IMR-90 (cell line): ENCODE measurements at regions of chr7 and their contacts with region 1.

Region 1: GRCh38 chr7:17646253-17646956 is 293.9 kb downstream of the SNX13 start:
- DNase-seq: peak; percentile 66
- ATAC-seq: peak; percentile 79
- H3K4me3 ChIP-seq: no peak overlapping the region
- H3K27ac ChIP-seq: no peak overlapping the region
- H3K4me1 ChIP-seq: peaks cover 8% of the 10 kb centered on the region
- H3K27me3 ChIP-seq: no peaks in the 10 kb centered on the region
- CTCF ChIP-seq: peak; percentile 71
- POLR2A ChIP-seq: no peak
- RAD21 ChIP-seq: peak; percentile 78

Region 2: GRCh38 chr7:16926283-16926682 is 720.1 kb before region 1 on chr7:
- CTCF ChIA-PET with region 1: interaction called, 3 read pairs
- POLR2A ChIA-PET with region 1: no interaction called
- dilution Hi-C with region 1: no loop called
- in situ Hi-C with region 1: no loop called
- intact Hi-C with region 1: loop called (anchors 1 kb)
- DNase-seq: peak; percentile 54
- ATAC-seq: peak; percentile 95
- H3K4me3 ChIP-seq: no peak overlapping the region
- H3K27ac ChIP-seq: no peak overlapping the region
- H3K4me1 ChIP-seq: peaks cover 3% of the 10 kb centered on the region
- H3K27me3 ChIP-seq: no peaks in the 10 kb centered on the region
- CTCF ChIP-seq: peak; percentile 72
- POLR2A ChIP-seq: no peak
- RAD21 ChIP-seq: peak; percentile 82

Region 3: DNA sequence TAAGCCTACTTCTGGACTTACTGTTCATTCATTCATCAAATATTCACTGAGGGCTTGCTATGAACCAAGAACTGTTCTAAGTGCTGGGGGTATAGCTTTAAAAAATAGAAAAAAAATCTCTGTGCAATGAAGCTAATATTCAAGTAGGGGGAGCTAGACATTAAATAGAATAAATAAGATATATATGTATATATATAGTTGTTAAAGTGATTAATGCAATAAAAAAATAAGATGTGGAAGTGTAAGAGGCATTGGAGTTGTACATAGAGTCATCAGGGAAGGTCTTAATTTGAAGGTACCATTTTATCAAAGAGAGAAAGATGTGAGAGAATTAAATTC is 583.4 kb before region 1 on chr7:
- CTCF ChIA-PET with region 1: no interaction called
- POLR2A ChIA-PET with region 1: no interaction called
- dilution Hi-C with region 1: no loop called
- in situ Hi-C with region 1: no loop called
- intact Hi-C with region 1: loop called (anchors 5 kb)
- DNase-seq: peak; percentile 25
- ATAC-seq: peak; percentile 80
- H3K4me3 ChIP-seq: no peak overlapping the region
- H3K27ac ChIP-seq: no peak overlapping the region
- H3K4me1 ChIP-seq: no peaks in the 10 kb centered on the region
- H3K27me3 ChIP-seq: no peaks in the 10 kb centered on the region
- CTCF ChIP-seq: peak; percentile 40
- POLR2A ChIP-seq: no peak
- RAD21 ChIP-seq: no peak

Region 4: GRCh38 chr7:17530741-17531417 is 115.5 kb before region 1 on chr7:
- CTCF ChIA-PET with region 1: no interaction called
- POLR2A ChIA-PET with region 1: no interaction called
- dilution Hi-C with region 1: no loop called
- in situ Hi-C with region 1: no loop called
- intact Hi-C with region 1: loop called (anchors 5 kb)
- DNase-seq: peak; percentile 15
- ATAC-seq: 0 out of 2 replicates have a peak, but pooled peaks have one; percentile 14
- H3K4me3 ChIP-seq: no peak overlapping the region
- H3K27ac ChIP-seq: no peak overlapping the region
- H3K4me1 ChIP-seq: peaks cover 9% of the 10 kb centered on the region
- H3K27me3 ChIP-seq: no peaks in the 10 kb centered on the region
- CTCF ChIP-seq: peak; percentile 41
- POLR2A ChIP-seq: no peak
- RAD21 ChIP-seq: peak; percentile 41

Region 5: GRCh38 chr7:17631061-17631460 is 15.3 kb before region 1 on chr7:
- CTCF ChIA-PET with region 1: no interaction called
- POLR2A ChIA-PET with region 1: no interaction called
- dilution Hi-C with region 1: no loop called
- in situ Hi-C with region 1: no loop called
- intact Hi-C with region 1: no loop called
- DNase-seq: no peak
- ATAC-seq: no peak
- H3K4me3 ChIP-seq: no peak overlapping the region
- H3K27ac ChIP-seq: no peak overlapping the region
- H3K4me1 ChIP-seq: no peaks in the 10 kb centered on the region
- H3K27me3 ChIP-seq: no peaks in the 10 kb centered on the region
- CTCF ChIP-seq: no peak
- POLR2A ChIP-seq: no peak
- RAD21 ChIP-seq: no peak